CD4-positive, alpha-beta T cell (primary cell): ENCODE measurements at regions of chr5 and their contacts with region 1.

Region 1: GRCh38 chr5:56148453-56148971 is 84.6 kb downstream of the ANKRD55 start:
- DNase-seq: peak in 13 of 14 experiments; percentile 28 to 75 (median 51)
- ATAC-seq: peak; percentile 80
- H3K4me3 ChIP-seq: no peak overlapping the region
- H3K4me3 Mint-ChIP-seq: peak overlapping the region; percentile 62
- H3K27ac ChIP-seq: peak overlapping the region; percentile 42 to 46
- H3K27ac Mint-ChIP-seq: peak overlapping the region; percentile 97
- H3K4me1 ChIP-seq: peaks cover 48% of the 10 kb centered on the region
- H3K4me1 Mint-ChIP-seq: peaks cover 74% of the 10 kb centered on the region
- H3K27me3 ChIP-seq: no peaks in the 10 kb centered on the region
- H3K27me3 Mint-ChIP-seq: no peaks in the 10 kb centered on the region
- CTCF ChIP-seq: no peak

Region 2: DNA sequence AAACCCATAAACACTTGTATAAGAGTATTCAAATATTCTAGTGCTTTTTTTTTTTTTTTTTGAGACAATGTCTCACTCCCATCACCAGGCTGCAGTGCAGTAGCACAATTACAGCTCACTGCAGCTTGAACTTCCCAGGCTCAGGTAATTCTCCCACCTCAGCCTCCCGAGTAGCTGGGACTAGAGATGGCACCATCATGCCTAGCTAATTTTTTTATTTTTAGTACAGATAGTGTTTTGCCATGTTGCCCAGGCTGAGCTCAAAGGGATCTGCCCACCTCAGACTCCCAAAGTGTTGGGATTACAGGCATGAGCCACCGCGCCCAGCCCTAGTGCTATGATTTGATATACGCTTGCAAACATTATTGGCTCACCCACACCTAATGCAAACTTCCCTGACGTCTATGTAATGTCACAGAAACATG is 165.5 kb before region 1 on chr5:
- CTCF ChIA-PET with region 1: interaction called, 5 read pairs
- POLR2A ChIA-PET with region 1: interaction called, 20 read pairs
- intact Hi-C with region 1: no loop called
- DNase-seq: peak in 7 of 14 experiments; percentile 18 to 71 (median 38)
- ATAC-seq: peak; percentile 44
- H3K4me3 ChIP-seq: peak overlapping the region; percentile 11
- H3K4me3 Mint-ChIP-seq: peak overlapping the region; percentile 72
- H3K27ac ChIP-seq: peak overlapping the region in 1 of 2 donors; percentile 10
- H3K27ac Mint-ChIP-seq: peak overlapping the region; percentile 94
- H3K4me1 ChIP-seq: peaks cover 31% of the 10 kb centered on the region
- H3K4me1 Mint-ChIP-seq: peaks cover 90% of the 10 kb centered on the region
- H3K27me3 ChIP-seq: no peaks in the 10 kb centered on the region
- H3K27me3 Mint-ChIP-seq: no peaks in the 10 kb centered on the region
- CTCF ChIP-seq: peak; percentile 66

Region 3: GRCh38 chr5:56126487-56127179 is 21.9 kb before region 1 on chr5:
- CTCF ChIA-PET with region 1: no interaction called
- POLR2A ChIA-PET with region 1: interaction called, 12 read pairs
- intact Hi-C with region 1: loop called in 1 of 2 experiments (anchors 2 kb)
- DNase-seq: peak in 4 of 14 experiments; percentile 10 to 29 (median 24)
- ATAC-seq: peak; percentile 54
- H3K4me3 ChIP-seq: no peak overlapping the region
- H3K4me3 Mint-ChIP-seq: peak overlapping the region; percentile 70
- H3K27ac ChIP-seq: peak overlapping the region; percentile 23 to 64
- H3K27ac Mint-ChIP-seq: peak overlapping the region; percentile 91
- H3K4me1 ChIP-seq: peaks cover 34% of the 10 kb centered on the region
- H3K4me1 Mint-ChIP-seq: peaks cover 70% of the 10 kb centered on the region
- H3K27me3 ChIP-seq: no peaks in the 10 kb centered on the region
- H3K27me3 Mint-ChIP-seq: no peaks in the 10 kb centered on the region
- CTCF ChIP-seq: no peak

Region 4: GRCh38 chr5:56200856-56201666 is 52.5 kb after region 1 on chr5:
- CTCF ChIA-PET with region 1: interaction called, 3 read pairs
- POLR2A ChIA-PET with region 1: interaction called, 4 read pairs
- intact Hi-C with region 1: loop called in 1 of 2 experiments (anchors 5 kb)
- DNase-seq: peak; percentile 39 to 86 (median 50)
- ATAC-seq: peak; percentile 95
- H3K4me3 ChIP-seq: no peak overlapping the region
- H3K4me3 Mint-ChIP-seq: no peak overlapping the region
- H3K27ac ChIP-seq: no peak overlapping the region
- H3K27ac Mint-ChIP-seq: peak overlapping the region; percentile 2
- H3K4me1 ChIP-seq: peaks cover 6% of the 10 kb centered on the region
- H3K4me1 Mint-ChIP-seq: peaks cover 34% of the 10 kb centered on the region
- H3K27me3 ChIP-seq: no peaks in the 10 kb centered on the region
- H3K27me3 Mint-ChIP-seq: no peaks in the 10 kb centered on the region
- CTCF ChIP-seq: peak; percentile 85